HEK293 (cell line): ENCODE measurements at regions of chr1 and their contacts with region 1.

Region 1: DNA sequence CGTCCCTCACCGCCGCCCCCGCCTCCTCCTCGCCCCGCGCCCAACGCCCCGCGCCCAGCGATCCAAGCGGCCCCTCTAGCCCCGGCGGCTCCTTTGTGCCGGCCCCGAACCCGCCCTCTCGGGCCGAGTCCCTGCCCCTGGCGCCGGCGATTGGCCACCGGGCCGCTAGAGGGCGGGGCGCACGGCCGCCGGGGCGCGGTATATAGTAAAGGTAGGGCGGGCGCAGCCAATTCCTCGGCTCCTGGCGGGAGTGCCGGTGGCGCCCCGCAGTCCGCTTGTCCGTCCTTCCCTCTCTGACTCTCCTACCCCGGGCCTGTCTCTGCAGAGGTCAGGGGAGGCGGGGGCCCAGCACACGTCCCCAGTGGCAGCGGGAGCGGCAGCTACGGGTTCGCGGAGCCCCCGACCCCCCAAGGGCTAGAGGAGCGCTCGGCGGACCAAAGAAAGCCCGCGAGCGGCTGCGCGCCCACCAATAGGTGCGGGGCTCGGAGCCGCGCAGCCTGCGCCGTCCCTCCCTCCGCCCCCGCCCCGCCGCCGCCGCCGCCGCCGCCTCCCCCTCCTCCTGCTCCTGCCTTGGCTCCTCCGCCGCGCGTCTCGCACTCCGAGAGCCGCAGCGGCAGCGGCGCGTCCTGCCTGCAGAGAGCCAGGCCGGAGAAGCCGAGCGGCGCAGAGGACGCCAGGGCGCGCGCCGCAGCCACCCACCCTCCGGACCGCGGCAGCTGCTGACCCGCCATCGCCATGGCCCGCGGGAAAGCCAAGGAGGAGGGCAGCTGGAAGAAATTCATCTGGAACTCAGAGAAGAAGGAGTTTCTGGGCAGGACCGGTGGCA is at the start of gene ATP1B1:
- H3K4me3 ChIP-seq: peak within 1 kb of the TSS; percentile 89
- H3K27ac ChIP-seq: peak within 1 kb of the TSS; percentile 93
- H3K4me1 ChIP-seq: peaks cover 36% of the 10 kb centered on the region
- CTCF ChIP-seq: peak; percentile 37; the same call in 1 of the 2 replicates

Region 2: DNA sequence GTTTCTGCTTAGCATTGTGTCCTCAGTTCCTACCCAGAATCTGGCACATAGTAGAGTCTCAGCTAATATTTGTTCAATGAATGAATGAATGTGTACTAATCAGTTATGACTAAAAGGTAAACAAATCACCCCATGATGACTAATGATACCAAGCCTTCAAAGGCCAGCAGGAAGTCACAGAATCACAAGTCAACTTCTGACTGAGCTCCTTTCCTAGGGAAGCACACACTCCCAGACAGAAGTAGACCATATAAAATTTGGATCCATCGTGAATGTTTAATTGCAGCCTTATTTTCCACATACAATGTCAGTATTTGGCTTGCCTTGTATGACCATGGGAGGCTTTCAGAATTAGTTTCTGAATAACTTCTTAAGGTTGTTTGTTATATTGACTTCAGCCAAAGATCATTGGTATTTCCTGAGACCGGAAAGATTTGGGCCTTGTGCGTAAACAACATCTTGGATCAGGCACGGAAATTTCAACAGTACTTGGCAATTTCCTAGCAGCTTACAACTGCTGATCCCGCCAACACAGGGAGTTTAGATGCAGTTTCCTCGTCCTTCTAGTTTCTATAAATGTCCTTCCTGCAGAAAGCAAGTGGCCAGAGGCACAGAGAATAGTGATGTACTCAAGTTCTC is 185.7 kb before region 1 on chr1:
- CTCF ChIA-PET with region 1: no interaction called
- POLR2A ChIA-PET with region 1: no interaction called
- H3K4me3 ChIP-seq: no peak overlapping the region
- H3K27ac ChIP-seq: no peak overlapping the region
- H3K4me1 ChIP-seq: no peaks in the 10 kb centered on the region
- CTCF ChIP-seq: no peak

Region 3: DNA sequence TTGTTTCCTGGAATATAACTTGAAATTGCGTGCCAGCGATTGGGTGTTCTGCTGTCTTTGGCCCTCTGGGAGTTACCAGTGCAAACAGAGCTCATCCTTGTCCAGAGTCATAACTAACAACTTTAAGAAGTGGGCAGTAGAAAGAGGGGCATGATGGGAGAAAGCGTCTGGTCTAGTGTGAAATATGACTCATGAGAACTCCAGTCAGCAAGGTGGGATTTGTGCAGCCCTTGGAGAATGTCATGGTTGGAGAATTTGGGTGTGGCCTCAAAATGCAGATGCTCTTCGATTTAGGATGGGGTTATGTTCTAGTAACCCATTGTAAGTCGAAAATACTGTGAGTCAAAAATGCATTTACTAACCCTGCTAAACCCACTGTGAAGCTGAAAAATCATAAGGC is 13.1 kb after region 1 on chr1:
- CTCF ChIA-PET with region 1: interaction called, 3 read pairs
- POLR2A ChIA-PET with region 1: interaction called, 13 read pairs
- H3K4me3 ChIP-seq: no peak overlapping the region
- H3K27ac ChIP-seq: no peak overlapping the region
- H3K4me1 ChIP-seq: peaks cover 12% of the 10 kb centered on the region
- CTCF ChIP-seq: no peak